Endothelial cell of umbilical vein (primary cell): ENCODE measurements at regions of chr6 and their contacts with region 1.

Region 1: DNA sequence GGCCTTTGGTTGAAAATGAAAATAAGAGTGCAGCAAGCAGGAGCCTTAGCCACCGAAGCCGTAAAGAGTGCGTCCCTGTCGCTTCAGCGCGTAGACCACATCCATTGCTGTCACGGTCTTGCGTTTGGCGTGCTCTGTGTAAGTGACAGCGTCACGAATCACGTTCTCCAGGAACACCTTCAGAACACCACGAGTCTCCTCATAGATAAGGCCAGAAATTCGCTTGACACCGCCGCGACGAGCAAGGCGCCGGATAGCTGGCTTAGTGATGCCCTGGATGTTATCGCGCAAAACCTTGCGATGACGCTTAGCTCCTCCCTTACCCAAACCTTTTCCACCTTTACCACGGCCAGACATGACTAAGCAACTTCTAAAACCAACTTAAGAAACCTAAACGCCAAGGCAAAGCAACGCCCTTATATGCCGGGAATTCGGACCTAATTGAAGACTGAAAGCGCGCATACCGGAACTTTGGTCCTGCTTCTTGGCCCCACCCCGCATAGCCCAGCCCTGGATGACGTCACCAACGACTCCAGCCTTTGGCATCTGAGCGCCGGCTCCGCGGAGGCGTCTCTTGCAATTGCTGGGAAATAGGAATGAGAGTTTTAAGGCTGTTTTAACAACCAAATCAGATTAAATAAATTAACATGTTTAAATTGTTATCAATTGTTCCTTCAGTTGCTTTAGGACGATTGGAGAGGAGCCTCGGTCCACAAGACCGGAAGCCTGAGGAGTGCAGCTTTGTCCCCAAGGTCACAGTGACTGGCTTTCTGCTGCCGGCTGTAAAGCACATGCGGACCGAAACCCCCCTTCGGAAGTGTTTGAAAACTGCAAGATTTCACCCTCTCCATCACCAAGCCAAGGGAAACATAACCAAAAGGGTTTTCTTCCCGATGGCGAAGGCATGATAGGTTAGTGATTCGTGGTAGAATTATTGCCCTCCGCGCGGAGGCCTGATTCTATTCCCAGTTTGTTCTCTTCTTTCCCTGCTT is 79.6 kb upstream of the BTN3A2 start:
- DNase-seq: peak; percentile 98
- H3K4me3 ChIP-seq: peak overlapping the region; percentile 5 to 68 (median 58)
- H3K27ac ChIP-seq: peak overlapping the region; percentile 68
- H3K4me1 ChIP-seq: no peaks in the 10 kb centered on the region
- H3K27me3 ChIP-seq: no peaks in the 10 kb centered on the region
- CTCF ChIP-seq: no peak
- POLR2A ChIP-seq: peak; percentile 99

Region 2: GRCh38 chr6:26103770-26104456 is 181.5 kb before region 1 on chr6:
- CTCF ChIA-PET with region 1: no interaction called
- POLR2A ChIA-PET with region 1: no interaction called
- dilution Hi-C with region 1: no loop called
- intact Hi-C with region 1: loop called (anchors 1 kb)
- DNase-seq: peak; percentile 97
- H3K4me3 ChIP-seq: peak overlapping the region; percentile 32 to 46 (median 34)
- H3K27ac ChIP-seq: peak overlapping the region; percentile 87
- H3K4me1 ChIP-seq: peaks cover 18% of the 10 kb centered on the region
- H3K27me3 ChIP-seq: peaks cover 0 to 4% of the 10 kb centered on the region in 2 experiments
- CTCF ChIP-seq: peak; percentile 31 to 57
- POLR2A ChIP-seq: peak; percentile 99

Region 3: DNA sequence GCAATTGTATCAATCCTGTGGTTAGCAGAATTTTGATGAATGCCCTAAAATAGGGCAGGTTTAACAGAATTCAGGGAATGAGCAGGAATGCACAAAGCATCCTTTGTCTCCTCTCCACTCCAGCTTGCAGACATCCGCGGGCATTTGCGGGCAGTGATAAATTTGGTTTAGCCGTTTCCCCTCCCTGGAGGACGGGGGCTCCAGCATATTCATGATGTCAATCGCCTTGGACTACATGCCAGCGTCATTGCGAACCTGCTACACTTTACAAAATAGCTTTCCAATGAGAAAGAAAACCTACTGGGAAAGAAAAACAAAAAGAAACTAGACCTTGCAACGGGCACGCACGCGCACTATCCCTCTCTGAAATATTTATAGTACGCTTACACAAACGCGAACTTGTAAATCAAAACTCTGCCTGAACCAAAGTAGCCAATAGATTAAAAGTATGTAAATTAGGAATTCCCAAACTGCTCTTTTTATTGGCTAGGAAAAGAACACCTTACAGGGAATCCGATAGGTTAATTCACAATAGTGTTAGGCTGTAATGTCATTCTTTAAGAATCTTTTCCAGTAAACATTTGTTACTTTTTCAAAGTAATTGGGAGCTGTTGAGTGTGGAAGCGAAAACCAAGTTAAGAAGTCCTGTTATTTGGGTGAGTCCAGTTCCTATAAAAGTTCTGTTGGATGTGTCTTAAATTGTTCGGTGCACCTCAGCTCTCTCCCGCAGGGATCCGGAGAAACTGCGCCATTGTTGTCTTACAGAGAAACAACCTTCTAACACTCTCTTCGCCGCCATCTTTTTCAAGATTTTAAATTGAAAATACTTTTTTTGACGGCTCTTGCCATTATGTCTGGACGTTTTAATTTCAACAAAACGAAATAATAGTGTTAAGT is 61.5 kb before region 1 on chr6:
- CTCF ChIA-PET with region 1: interaction called, 4 read pairs
- POLR2A ChIA-PET with region 1: interaction called, 4 read pairs
- dilution Hi-C with region 1: no loop called
- intact Hi-C with region 1: loop called (anchors 1 kb)
- DNase-seq: peak; percentile 94
- H3K4me3 ChIP-seq: peak overlapping the region; percentile 47 to 94 (median 77)
- H3K27ac ChIP-seq: peak overlapping the region; percentile 96
- H3K4me1 ChIP-seq: peaks cover 14% of the 10 kb centered on the region
- H3K27me3 ChIP-seq: no peaks in the 10 kb centered on the region
- CTCF ChIP-seq: no peak
- POLR2A ChIP-seq: peak; percentile 71

Region 4: GRCh38 chr6:26249957-26250697 is 35.3 kb before region 1 on chr6:
- CTCF ChIA-PET with region 1: interaction called, 9 read pairs
- POLR2A ChIA-PET with region 1: interaction called, 6 read pairs
- dilution Hi-C with region 1: no loop called
- intact Hi-C with region 1: loop called (anchors 1 kb)
- DNase-seq: peak; percentile 87
- H3K4me3 ChIP-seq: peak overlapping the region; percentile 27 to 85 (median 49)
- H3K27ac ChIP-seq: peak overlapping the region; percentile 67
- H3K4me1 ChIP-seq: peaks cover 3% of the 10 kb centered on the region
- H3K27me3 ChIP-seq: no peaks in the 10 kb centered on the region
- CTCF ChIP-seq: peak; percentile 28 to 52
- POLR2A ChIP-seq: peak; percentile 87

Region 5: GRCh38 chr6:26312501-26313390 is 27.3 kb after region 1 on chr6:
- CTCF ChIA-PET with region 1: no interaction called
- POLR2A ChIA-PET with region 1: interaction called, 4 read pairs
- dilution Hi-C with region 1: no loop called
- intact Hi-C with region 1: loop called (anchors 1 kb)
- DNase-seq: peak; percentile 83
- H3K4me3 ChIP-seq: peak overlapping the region; percentile 39 to 98 (median 95)
- H3K27ac ChIP-seq: peak overlapping the region; percentile 38
- H3K4me1 ChIP-seq: peaks cover 12% of the 10 kb centered on the region
- H3K27me3 ChIP-seq: peaks cover 4 to 9% of the 10 kb centered on the region in 2 experiments
- CTCF ChIP-seq: no peak
- POLR2A ChIP-seq: no peak

Region 6: DNA sequence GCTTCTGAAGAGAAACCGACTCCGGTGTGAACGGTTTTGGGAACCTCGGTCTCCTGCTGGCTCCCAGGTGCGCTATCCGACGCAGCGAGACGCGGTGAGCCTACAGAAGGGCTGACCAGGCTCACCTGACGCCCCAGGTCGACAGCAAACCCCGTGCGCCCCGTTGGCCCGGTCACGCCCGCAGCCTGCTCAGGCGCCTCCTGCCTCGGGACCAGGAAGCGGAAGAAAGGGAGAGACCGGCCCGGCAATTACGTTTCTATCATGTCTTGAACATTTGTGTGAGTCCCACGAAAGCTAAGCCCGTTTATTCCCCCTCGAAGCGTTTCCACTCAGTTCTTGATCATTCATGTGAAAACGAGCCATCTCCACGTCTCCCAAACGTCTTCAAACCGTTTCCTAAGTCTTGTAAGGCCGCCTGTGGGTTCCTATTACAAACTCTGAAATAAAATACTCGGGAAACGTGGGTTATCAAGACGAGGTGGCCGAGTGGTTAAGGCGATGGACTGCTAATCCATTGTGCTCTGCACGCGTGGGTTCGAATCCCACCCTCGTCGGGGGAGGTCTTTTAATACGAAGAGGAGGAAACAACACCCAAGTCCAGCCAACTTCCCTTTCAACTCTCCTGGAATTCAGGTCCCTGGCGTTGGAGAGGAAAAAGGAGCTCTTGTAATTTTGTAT is 811.5 kb after region 1 on chr6:
- CTCF ChIA-PET with region 1: no interaction called
- POLR2A ChIA-PET with region 1: no interaction called
- dilution Hi-C with region 1: no loop called
- intact Hi-C with region 1: no loop called
- DNase-seq: peak; percentile 64
- H3K4me3 ChIP-seq: peak overlapping the region; percentile 48 to 70 (median 61)
- H3K27ac ChIP-seq: no peak overlapping the region
- H3K4me1 ChIP-seq: peaks cover 9% of the 10 kb centered on the region
- H3K27me3 ChIP-seq: peaks cover 4 to 13% of the 10 kb centered on the region in 2 experiments
- CTCF ChIP-seq: no peak
- POLR2A ChIP-seq: no peak